Calu3 (cell line): ENCODE measurements at regions of chr9 and their contacts with region 1.

Region 1: DNA sequence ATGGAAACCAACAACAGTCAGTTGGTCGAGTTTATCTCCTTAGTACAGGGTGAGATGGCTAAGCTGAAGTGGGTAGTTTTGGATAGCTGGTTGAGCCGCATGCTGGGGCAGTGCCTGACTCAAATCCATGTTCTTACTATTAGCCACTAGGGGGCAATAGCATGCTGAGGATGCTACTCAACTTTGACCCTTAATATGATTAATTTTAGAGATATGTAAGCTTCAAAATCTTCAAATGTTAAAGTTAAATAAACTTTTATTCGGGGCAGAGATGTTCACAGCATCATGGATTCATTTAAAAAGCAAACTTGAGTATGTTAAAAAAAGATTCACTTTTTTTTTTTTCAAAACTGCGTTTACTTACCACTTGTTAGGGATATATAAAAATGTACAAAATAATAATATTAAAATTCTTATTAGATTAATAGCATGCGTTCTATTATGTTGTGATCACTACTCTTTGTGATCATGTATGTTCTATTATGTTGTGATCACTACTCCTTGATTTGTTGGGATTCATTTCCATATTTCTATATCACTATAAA is 57.0 kb downstream of the C9orf153 start:
- DNase-seq: peak; percentile 15
- H3K4me3 Mint-ChIP-seq: no peak overlapping the region
- H3K27ac Mint-ChIP-seq: no peak overlapping the region
- H3K4me1 Mint-ChIP-seq: peaks cover 14% of the 10 kb centered on the region
- H3K27me3 Mint-ChIP-seq: peaks cover 13% of the 10 kb centered on the region
- CTCF ChIP-seq: peak; percentile 64

Region 2: DNA sequence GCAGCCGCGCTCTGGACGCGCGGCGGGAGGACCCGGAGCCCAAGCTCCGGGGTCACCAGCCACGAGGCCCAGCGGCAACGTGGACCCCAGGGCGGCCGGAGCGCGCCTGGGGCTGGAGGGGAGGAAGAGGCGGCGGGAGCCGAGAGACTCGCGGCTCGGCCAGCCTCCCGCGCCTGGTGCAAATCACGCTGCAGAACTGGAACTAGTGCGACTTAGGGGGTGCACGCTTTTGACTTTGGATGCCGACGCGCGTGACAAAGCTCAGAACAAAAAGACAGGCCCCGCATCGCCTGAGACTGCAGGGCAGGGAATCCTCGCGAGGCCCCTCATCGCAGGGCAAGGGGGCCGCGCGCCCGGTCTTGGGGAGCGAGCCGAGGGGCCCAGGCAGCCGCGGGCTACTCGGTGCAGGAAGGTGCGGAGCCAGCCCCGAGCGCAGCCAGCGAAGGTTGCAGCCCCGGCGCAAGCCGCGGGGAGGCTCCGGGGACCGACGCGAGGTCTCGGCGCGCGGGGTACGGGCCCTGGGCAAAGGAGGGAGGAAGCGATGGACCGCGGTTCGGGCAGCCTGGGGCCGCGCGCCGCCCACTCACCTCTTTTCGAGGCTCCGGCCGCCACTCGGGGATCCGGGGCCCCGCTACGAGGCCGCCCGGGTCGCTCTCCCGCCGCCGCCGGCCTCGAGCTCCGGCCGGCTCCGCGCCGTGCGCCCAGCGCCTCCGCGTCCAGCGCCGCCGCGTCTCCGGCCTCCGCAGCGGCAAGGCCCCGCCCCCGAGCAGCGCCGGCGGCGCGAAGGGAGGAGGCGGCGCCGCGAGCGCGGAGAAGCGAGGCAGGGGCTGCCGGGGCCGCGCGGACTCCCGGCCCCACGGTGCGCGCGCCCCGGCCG is 103.3 kb before region 1 on chr9 and contains the start of gene GOLM1:
- CTCF ChIA-PET with region 1: interaction called, 3 read pairs
- intact Hi-C with region 1: loop called (anchors 10 kb)
- DNase-seq: peak; percentile 66
- H3K4me3 Mint-ChIP-seq: peak within 1 kb of the TSS; percentile 78
- H3K27ac Mint-ChIP-seq: peak within 1 kb of the TSS; percentile 74
- H3K4me1 Mint-ChIP-seq: peaks cover 15% of the 10 kb centered on the region
- H3K27me3 Mint-ChIP-seq: no peaks in the 10 kb centered on the region
- CTCF ChIP-seq: no peak
- total RNA-seq, gene GOLM1: 177 and 237 TPM in 2 replicates